Panc1 (cell line): ENCODE measurements at regions of chr19 and their contacts with region 1.

Region 1: DNA sequence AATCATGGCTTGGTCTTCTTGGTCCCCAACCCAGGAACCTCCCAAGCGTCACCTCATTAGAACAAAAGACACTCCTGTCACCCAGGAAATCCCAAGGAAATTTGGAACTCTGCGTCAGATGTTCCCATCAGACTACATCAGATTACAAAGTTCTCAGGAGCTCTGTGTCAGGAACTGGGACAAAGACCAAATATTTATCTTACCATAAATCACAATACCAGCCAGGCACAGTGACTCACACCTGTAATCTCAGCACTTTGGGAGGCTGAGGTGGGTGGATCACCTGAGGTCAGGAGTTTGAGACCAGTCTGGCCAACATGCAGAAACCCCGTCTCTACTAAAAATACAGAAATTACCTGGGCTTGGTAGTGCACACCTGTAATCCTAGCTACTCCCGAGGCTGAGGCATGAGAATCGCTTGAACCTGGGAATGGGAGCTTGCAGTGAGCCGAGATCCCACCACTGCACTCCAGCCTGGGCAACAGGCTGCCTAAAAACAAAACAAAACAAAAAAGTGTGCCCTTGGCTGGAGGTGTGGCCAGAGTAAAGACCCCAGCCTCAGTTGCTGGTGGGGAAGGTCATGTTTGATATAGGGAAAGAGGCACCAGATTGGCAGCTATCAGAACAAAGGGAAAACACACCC is 16.7 kb upstream of the CCDC124 start:
- DNase-seq: no peak
- ATAC-seq: 0 out of 2 replicates have a peak, but pooled peaks have one; percentile 12
- H3K4me3 ChIP-seq: no peak overlapping the region
- H3K27ac ChIP-seq: no peak overlapping the region
- H3K4me1 ChIP-seq: no peaks in the 10 kb centered on the region
- H3K27me3 ChIP-seq: no peaks in the 10 kb centered on the region
- CTCF ChIP-seq: no peak

Region 2: DNA sequence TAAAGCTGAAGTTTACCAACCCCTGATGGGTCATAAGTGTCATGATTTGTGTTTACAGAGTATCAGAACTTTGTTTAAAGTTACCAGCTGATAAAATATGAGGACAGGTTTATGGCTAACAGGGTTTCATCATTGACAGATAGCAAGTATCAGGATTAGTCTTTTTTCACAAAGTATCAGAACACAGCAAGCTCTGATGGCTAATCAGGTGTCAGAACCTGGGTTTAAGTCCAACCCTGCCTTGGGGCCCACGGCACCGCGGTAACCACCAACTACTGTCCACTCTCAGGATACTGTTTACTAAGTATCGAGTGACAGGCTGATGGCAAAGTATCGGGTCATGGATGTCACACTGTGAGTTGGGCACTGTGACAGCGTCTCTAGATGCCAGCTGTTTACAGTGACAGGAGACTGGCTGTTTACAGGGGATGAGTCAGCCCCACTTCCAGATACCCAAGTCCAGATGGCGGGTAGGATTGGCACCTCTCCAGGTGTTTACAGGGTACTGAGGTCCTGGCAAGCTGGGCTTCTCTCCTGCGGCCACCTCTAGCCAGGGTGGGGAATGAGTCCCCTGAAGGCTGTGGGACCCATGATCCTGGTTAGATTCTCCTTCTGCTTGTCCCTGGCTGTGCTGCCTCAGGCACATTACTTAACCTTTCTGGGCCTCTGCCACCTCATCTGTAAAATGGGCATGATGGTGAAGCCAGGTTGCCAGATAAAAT is 113.7 kb after region 1 on chr19:
- CTCF ChIA-PET with region 1: no interaction called
- POLR2A ChIA-PET with region 1: interaction called, 15 read pairs
- in situ Hi-C with region 1: no loop called
- intact Hi-C with region 1: no loop called
- DNase-seq: no peak
- ATAC-seq: peak; percentile 88
- H3K4me3 ChIP-seq: peak overlapping the region in 1 of 2 experiments; percentile 8; a peak in 1 of 4 replicates
- H3K27ac ChIP-seq: peak overlapping the region; percentile 44; the same call in 1 of the 2 replicates
- H3K4me1 ChIP-seq: peaks cover 10% of the 10 kb centered on the region
- H3K27me3 ChIP-seq: no peaks in the 10 kb centered on the region
- CTCF ChIP-seq: no peak